PC-9 (cell line): ENCODE measurements at regions of chr5 and their contacts with region 1.

Region 1: GRCh38 chr5:81506900-81507588 is 113.1 kb upstream of the ACOT12 start:
- DNase-seq: peak; percentile 25 to 67
- H3K4me3 ChIP-seq: no peak overlapping the region
- H3K27ac ChIP-seq: no peak overlapping the region
- H3K4me1 ChIP-seq: no peaks in the 10 kb centered on the region
- H3K27me3 ChIP-seq: no peaks in the 10 kb centered on the region
- CTCF ChIP-seq: peak; percentile 85

Region 2: GRCh38 chr5:81371354-81371876 is 135.6 kb before region 1 on chr5:
- CTCF ChIA-PET with region 1: no interaction called
- POLR2A ChIA-PET with region 1: no interaction called
- intact Hi-C with region 1: no loop called
- DNase-seq: no peak
- H3K4me3 ChIP-seq: no peak overlapping the region
- H3K27ac ChIP-seq: no peak overlapping the region
- H3K4me1 ChIP-seq: no peaks in the 10 kb centered on the region
- H3K27me3 ChIP-seq: 0 out of 2 replicates have a peak, but pooled peaks cover 6% of the 10 kb centered on the region
- CTCF ChIP-seq: no peak

Region 3: GRCh38 chr5:81425569-81425968 is 81.5 kb before region 1 on chr5:
- CTCF ChIA-PET with region 1: no interaction called
- POLR2A ChIA-PET with region 1: no interaction called
- intact Hi-C with region 1: loop called (anchors 5 kb)
- DNase-seq: peak; percentile 2 to 55
- H3K4me3 ChIP-seq: no peak overlapping the region
- H3K27ac ChIP-seq: no peak overlapping the region
- H3K4me1 ChIP-seq: peaks cover 35% of the 10 kb centered on the region
- H3K27me3 ChIP-seq: no peaks in the 10 kb centered on the region
- CTCF ChIP-seq: peak; percentile 83

Region 4: DNA sequence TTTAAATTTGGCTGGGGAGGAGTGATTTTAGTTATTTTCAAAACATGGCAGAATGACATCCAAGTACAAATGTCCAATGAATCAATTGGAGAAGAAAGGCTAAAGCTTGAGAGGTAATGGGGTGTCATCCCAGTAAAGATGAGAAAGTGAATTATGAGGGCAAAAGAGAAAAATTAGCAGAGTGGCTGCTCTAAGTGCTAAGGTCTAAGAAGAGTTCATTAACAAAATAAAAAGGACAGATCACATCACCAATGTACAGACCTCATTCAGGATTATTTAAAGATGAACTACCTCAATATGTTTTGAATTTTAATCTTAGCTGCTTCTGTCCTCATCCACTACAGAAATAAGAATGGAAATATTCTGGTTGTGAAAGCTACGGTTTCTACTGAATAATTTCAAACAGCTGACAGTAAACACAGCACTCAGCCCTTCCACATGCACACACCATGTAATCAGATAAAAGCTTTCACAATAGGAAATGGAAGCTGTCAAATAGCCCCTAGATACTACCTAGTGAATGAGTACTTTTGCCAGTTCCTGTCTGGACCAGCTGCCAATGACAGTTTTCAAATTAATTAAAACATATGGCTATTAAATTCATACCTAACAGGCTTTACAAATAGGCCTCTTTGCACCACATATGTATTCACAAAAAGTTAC is 72.3 kb after region 1 on chr5:
- CTCF ChIA-PET with region 1: no interaction called
- POLR2A ChIA-PET with region 1: no interaction called
- intact Hi-C with region 1: no loop called
- DNase-seq: no peak
- H3K4me3 ChIP-seq: no peak overlapping the region
- H3K27ac ChIP-seq: no peak overlapping the region
- H3K4me1 ChIP-seq: no peaks in the 10 kb centered on the region
- H3K27me3 ChIP-seq: no peaks in the 10 kb centered on the region
- CTCF ChIP-seq: no peak

Region 5: DNA sequence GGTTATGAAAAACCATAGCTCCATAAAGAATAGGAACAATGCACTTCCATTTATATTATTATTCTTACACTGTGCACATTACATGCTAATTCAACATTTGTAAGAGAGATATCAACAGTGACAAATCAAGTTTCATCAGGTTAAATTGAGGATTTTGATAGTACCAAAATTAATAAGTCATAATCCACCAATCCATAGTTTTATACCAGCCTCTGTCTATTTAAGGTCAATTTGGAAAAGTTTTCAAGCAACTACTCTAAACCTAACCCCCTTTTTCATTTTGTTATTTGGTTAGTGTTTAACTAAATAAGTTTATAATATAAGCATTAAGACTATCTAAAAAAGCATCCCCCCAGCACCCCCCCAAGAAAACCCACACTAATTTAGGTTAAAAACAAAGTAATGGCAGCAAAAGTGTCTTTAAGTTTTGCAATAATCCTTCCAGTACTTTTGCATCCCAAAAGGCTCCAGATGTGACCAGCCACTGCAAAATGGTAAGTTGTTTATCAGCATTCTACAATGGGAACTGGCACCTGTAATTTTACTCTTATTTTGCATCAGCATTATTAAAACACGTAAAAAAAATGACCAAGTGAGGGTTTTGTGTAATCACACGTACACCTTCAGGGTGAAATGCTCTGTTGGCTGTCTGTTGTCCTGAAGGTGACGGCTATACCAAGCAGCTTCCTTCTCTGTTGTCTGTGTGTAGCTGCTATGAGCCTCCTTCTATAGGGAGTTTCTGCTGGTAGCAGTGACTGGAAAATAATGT is 280.6 kb after region 1 on chr5:
- CTCF ChIA-PET with region 1: interaction called, 11 read pairs
- POLR2A ChIA-PET with region 1: no interaction called
- intact Hi-C with region 1: no loop called
- DNase-seq: peak; percentile 43 to 83
- H3K4me3 ChIP-seq: no peak overlapping the region
- H3K27ac ChIP-seq: peak overlapping the region; percentile 81
- H3K4me1 ChIP-seq: peaks cover 24% of the 10 kb centered on the region
- H3K27me3 ChIP-seq: no peaks in the 10 kb centered on the region
- CTCF ChIP-seq: no peak

Region 6: DNA sequence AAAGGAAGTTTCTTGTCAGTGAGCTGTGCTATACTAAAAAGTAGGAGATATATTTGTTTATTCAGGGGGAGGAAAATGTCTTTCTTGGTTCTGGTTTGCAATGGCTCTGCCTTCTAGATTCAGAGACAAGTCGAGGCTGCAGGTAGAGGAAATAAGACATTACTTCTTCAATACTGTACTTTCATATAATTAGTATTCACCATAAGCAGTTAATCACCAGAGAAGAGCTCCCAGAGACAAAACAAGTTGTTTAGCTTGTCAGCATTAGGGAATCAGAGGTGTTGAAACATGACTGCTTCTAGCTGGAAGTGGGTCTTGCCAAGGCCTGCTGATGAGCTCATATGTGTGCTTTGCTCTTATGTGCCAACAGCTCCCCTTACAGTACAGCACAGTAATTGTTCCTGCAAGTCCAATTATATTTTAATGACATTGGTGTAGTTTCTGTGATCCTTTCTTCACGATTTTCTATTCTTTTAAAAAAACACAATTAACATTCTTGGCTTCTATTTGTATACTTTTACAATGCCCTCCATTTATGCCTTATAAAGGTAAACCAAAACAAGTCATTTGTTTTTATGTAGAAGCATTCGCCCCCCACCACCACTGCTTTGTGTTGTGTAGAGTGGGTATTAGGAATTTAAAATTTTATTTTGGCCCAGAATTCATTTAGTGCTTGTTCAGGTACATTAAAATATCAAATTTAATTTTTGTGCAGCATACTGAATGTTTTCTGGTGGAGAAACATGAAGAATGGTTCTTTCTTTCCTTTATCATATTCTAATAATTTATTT is 658.9 kb after region 1 on chr5:
- CTCF ChIA-PET with region 1: interaction called, 11 read pairs
- POLR2A ChIA-PET with region 1: no interaction called
- intact Hi-C with region 1: loop called (anchors 1 kb)
- DNase-seq: peak; percentile 28 to 79
- H3K4me3 ChIP-seq: no peak overlapping the region
- H3K27ac ChIP-seq: no peak overlapping the region
- H3K4me1 ChIP-seq: peaks cover 7% of the 10 kb centered on the region; the same call in 1 of the 2 replicates
- H3K27me3 ChIP-seq: no peaks in the 10 kb centered on the region
- CTCF ChIP-seq: peak; percentile 83

Region 7: GRCh38 chr5:82225525-82226172 is 718.6 kb after region 1 on chr5:
- CTCF ChIA-PET with region 1: interaction called, 4 read pairs
- POLR2A ChIA-PET with region 1: no interaction called
- intact Hi-C with region 1: loop called (anchors 1 kb)
- DNase-seq: peak in 1 of 2 experiments; percentile 49
- H3K4me3 ChIP-seq: no peak overlapping the region
- H3K27ac ChIP-seq: no peak overlapping the region
- H3K4me1 ChIP-seq: no peaks in the 10 kb centered on the region
- H3K27me3 ChIP-seq: no peaks in the 10 kb centered on the region
- CTCF ChIP-seq: peak; percentile 88